ENCODE measurements at regions of chr6 and their contacts with region 1.

Region 1: DNA sequence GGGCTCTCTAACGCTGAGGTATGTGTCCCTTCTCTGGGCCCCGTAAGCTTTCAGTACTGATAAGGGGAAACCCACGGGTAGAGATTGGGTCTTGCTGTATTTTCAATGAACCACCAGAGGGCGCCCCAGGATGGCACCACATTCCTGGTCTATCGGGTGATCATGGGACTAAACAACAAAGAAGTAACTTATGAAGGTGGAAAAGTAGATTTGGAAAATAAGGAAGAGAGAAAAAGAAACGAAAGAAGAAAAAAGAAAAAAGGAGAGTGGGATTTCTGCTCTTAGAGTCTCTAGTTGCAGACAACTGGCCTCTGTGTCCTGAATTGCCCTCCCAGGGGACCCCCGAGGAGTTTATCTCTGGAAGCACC is 93.8 kb downstream of the GMPR start:
- DNase-seq: peak; percentile 86
- H3K4me3 ChIP-seq: no peak overlapping the region
- H3K27ac ChIP-seq: no peak overlapping the region
- H3K4me1 ChIP-seq: peaks cover 6% of the 10 kb centered on the region
- H3K27me3 ChIP-seq: no peaks in the 10 kb centered on the region
- CTCF ChIP-seq: peak; percentile 88

Region 2: DNA sequence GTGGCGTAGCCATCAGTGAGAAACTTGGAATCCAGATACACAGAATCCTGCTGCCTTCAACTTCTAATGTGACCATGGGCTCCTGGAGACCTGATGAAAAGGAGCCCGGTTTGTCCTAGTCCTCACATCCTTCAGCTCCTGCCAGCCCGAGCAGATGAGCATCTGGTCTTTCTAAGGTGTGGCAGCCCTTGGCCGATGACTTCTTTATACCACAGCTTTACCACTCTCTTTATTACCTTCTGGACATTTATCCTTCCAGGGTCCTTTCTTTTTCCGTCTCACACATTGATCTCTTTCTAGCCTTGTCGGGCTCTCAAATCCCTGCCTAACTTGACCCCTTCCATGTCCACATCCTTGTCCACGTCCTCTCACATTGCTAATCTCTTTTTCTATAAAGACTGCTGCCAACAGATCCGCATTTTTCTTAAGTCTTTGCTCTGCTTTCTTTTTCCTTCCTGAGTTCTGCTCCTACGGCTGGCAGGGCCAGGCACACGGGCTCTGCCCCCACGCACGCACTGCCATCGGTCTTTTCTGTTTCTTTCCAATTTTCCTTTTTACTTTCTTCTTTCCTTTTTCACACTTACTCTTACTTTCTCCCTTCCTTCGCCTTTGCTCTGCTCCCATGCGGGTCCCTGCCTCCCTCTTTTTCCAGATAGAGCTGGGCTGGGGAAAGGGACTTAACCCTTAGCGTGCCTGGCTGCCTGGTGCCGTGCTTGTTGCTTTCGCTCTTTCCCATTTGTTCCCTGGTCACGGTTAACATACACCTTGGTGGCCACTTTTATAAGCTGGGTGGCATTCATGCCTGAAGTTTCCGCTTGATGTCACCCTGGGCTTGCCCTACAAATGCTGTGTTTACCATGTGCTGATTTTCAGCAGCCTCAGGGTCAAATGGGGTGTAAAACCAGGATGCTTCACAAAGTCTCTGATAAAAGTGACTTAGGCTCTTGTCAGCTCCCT is 103.2 kb before region 1 on chr6:
- intact Hi-C with region 1: loop called (anchors 5 kb)
- DNase-seq: peak; percentile 24
- H3K4me3 ChIP-seq: peak overlapping the region; percentile 10
- H3K27ac ChIP-seq: no peak overlapping the region
- H3K4me1 ChIP-seq: no peaks in the 10 kb centered on the region
- H3K27me3 ChIP-seq: no peaks in the 10 kb centered on the region
- CTCF ChIP-seq: no peak

Region 3: DNA sequence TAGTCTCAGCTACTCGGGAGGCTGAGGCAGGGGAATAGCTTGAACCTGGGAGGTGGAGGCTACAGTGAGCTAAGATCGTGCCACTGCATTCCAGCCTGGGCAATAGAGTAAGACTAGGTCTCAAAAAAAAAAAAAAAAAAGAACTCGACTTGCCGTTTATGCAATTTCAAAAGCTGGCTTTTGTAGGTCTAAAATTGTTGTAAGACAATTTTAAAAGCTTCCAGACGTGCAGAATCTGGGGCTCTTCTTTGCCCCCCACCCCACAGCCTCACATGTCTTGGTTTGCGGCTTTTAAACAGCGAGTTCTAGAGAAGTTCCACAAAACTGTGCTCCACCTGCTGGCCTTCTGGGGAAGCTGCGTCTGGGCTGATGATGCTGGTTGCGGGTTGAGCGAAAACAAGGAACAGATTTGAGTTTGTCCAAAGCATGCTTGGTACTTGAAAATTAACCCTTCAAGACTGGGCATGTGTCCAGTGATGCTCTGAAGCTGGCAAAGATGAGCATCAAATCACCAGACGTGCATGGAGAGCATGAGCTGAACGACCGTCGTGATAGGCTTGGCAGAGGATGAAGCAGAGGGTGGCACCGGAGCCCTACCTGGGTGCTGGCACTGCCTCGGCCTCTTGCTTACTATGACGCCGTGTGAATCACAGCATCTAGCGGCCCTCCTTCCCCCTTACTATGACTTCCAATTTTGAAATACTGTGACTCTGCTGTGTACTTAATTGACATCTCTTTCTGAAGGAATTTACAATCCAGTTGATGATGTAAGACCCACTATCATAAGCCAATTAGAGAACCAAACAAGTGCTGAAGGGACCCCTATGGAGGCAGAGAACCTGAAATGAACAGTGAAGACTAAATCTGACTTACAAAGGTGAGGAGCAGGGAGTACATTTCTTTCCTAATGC is 77.6 kb after region 1 on chr6:
- intact Hi-C with region 1: loop called (anchors 2 kb)
- DNase-seq: peak; percentile 69
- H3K4me3 ChIP-seq: no peak overlapping the region
- H3K27ac ChIP-seq: no peak overlapping the region
- H3K4me1 ChIP-seq: no peaks in the 10 kb centered on the region
- H3K27me3 ChIP-seq: no peaks in the 10 kb centered on the region
- CTCF ChIP-seq: peak; percentile 72

Region 4: DNA sequence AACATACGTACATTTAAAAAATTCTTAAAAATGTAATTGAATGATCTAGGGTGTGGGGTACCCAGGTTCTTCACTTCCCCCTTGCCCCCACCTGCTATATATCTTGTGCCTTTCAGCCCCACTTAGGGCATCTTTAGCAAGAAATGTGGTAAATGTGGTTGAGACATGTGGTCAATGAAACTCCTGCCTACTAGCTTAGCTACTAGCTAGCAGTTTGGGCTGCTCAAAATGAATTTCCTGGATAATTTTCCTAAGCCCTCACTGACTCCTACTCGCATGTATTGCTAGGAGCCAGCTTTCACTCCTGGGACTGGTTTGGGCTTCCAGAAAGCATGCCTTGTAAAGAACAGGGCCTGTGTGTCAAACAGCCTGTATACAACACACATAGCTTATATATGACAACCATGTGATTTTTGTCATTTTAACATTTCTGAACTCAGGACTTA is 171.8 kb after region 1 on chr6:
- intact Hi-C with region 1: no loop called
- DNase-seq: no peak
- H3K4me3 ChIP-seq: no peak overlapping the region
- H3K27ac ChIP-seq: no peak overlapping the region
- H3K4me1 ChIP-seq: no peaks in the 10 kb centered on the region
- H3K27me3 ChIP-seq: no peaks in the 10 kb centered on the region
- CTCF ChIP-seq: no peak

Region 5: DNA sequence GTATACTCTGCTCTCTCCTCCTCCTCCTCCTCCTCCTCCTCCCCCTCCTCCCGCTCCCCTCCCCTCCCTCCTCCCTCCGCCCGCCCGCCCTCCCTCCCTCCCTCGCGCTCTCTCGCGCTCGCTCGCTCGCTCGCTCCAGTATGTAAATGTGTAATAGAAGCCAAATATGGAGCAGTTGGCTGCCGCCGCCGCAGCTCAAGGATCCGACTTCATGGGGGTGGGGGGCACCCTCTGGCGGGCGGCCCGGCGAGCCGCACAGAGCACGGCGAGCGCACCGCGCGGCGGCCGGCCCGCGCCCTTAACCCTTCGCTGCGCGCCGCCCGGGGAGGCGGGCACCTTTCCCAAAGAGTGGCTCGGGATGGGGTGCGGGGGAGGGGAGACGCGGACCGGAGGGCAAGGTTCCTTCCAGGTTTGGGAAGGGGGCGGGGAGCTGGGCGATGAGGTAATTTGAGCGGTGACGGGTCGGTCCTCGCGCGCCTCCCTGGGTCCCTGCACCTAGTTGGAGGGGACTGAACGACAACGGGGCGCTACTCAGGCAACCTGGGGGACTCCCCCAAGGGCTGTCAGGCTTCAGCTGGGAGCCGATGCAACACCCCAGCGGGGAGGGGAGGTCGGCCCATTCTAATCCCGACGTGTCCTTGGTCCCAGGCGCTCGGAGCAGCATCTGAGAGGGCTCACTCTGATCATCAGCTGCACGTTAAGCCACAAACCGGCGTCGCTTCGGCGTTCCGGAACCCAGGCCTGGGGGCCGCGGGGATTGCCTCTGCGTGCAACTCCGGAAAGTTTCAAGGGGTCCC is 429.5 kb after region 1 on chr6:
- intact Hi-C with region 1: loop called (anchors 5 kb)
- DNase-seq: peak; percentile 94
- H3K4me3 ChIP-seq: peak overlapping the region; percentile 80
- H3K27ac ChIP-seq: peak overlapping the region; percentile 97
- H3K4me1 ChIP-seq: peaks cover 8% of the 10 kb centered on the region
- H3K27me3 ChIP-seq: no peaks in the 10 kb centered on the region
- CTCF ChIP-seq: no peak

Region 6: GRCh38 chr6:16964553-16965501 is 632.7 kb after region 1 on chr6:
- intact Hi-C with region 1: loop called (anchors 10 kb)
- DNase-seq: peak; percentile 65
- H3K4me3 ChIP-seq: no peak overlapping the region
- H3K27ac ChIP-seq: no peak overlapping the region
- H3K4me1 ChIP-seq: no peaks in the 10 kb centered on the region
- H3K27me3 ChIP-seq: no peaks in the 10 kb centered on the region
- CTCF ChIP-seq: peak; percentile 85

Region 7: DNA sequence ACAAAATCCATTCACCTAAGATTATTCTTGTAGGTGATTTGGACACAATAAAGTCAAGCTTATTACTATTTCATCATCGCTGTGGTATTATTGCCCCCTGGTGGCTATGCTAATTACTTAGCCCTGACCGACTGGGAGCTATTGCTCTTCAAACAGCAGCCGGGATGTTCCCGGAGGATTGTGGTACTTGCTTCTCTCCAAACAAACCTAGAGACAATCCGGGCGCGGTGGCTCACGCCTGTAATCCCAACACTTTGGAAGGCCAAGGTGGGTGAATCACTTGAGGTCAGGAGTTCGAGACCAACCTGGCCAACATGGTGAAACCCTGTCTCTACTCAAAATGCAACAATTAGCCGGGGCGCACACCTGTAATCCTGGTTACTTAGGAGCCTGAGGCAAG is 754.3 kb after region 1 on chr6:
- intact Hi-C with region 1: loop called (anchors 10 kb)
- DNase-seq: peak; percentile 65
- H3K4me3 ChIP-seq: no peak overlapping the region
- H3K27ac ChIP-seq: no peak overlapping the region
- H3K4me1 ChIP-seq: no peaks in the 10 kb centered on the region
- H3K27me3 ChIP-seq: no peaks in the 10 kb centered on the region
- CTCF ChIP-seq: peak; percentile 66

Measured in colonic mucosa (tissue), 4 donors.